Left ventricle myocardium superior (tissue), 1 donor: ENCODE measurements at regions of chr9 and their contacts with region 1.

Region 1: DNA sequence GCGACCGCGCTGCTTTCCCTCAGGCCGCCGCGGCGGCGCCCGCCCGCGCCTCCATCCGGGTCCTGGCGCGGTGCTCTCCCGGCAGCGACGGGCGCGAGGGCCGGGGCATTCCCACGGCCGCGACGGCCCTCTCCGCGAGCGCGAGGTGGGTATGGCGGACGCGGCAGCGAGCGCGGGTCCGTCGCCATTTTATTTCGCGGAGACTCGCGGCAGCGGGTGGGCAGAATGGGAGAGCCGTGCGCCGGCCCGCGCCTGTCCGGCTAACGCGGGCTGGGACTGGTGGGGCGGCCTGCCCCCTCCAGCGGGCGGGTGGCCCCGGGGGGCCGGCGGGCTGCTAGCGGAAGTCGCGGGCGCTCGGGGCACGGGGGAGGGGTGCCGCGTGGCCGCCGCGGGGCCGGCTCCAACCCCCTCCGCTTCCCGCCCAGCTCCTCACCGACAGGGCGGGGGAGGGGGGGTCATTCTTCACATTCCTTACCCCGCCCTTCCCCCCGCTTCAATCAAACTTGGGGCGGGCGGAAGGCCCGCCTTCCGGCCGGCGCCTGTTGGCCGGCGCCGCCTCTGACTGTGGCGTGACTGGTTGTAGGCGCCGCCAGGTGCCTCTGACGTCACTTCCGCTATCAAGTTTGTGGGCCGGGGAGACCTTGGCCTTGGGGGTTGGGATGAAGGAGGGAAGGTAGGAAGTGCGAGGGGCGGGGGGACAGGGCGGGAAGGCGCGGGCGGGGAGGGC is 82.1 kb downstream of the PTPDC1 start:
- DNase-seq: peak; percentile 98
- ATAC-seq: peak; percentile 81

Region 2: GRCh38 chr9:93183609-93184431 is 982.6 kb before region 1 on chr9 and contains the start of gene WNK2:
- intact Hi-C with region 1: loop called (anchors 5 kb)
- DNase-seq: peak; percentile 74
- ATAC-seq: peak; percentile 60
- total RNA-seq, gene WNK2: 250 TPM